B cell (primary cell): ENCODE measurements at regions of chr10 and their contacts with region 1.

Region 1: GRCh38 chr10:112721080-112721698 is 228.9 kb upstream of the TCF7L2 start:
- DNase-seq: peak; percentile 24
- ATAC-seq: peak; percentile 31
- H3K4me3 ChIP-seq: no peak overlapping the region
- H3K4me3 Mint-ChIP-seq: no peak overlapping the region
- H3K27ac ChIP-seq: no peak overlapping the region
- H3K27ac Mint-ChIP-seq: no peak overlapping the region
- H3K4me1 ChIP-seq: no peaks in the 10 kb centered on the region
- H3K4me1 Mint-ChIP-seq: no peaks in the 10 kb centered on the region
- H3K27me3 ChIP-seq: no peaks in the 10 kb centered on the region
- H3K27me3 Mint-ChIP-seq: no peaks in the 10 kb centered on the region
- CTCF ChIP-seq: peak; percentile 62

Region 2: DNA sequence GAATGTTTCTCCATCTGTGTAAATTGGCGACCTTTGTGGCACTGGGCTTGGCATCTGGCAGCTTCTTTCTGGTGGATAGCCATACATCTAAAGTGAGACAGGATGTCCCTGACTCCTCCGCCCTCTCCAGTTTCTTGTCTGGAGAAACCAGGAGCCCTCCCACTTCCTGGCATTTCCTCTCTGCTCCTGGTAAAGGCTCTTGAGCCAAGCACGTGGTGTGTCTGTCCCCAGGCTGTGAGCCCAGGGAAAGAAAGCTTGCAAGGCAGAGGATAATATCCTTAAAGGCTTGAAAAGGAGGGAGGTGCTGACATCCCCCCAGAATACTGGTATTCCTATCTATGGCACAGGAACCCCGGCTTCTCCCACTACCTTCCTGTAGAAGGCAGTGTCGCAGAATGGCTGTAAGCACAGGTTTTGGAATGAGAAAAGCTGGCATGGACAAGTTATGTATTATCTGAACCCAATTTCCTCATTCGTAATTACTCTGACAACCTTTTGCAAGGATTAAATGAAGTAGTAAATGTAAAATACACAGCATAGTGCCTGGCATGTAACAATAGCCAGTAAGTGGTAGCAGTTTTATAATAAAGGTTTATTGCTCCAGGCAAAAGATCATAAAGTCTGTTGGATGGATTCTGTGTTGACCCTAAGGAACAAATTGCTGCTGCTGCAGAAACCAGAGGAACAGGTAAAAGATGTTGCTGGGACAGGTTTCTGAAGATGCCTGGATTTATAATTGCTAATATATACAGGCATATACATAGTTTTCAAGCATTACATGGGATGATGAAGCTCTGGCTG is 359.0 kb before region 1 on chr10:
- CTCF ChIA-PET with region 1: no interaction called
- POLR2A ChIA-PET with region 1: no interaction called
- intact Hi-C with region 1: no loop called
- DNase-seq: no peak
- ATAC-seq: no peak
- H3K4me3 ChIP-seq: no peak overlapping the region
- H3K4me3 Mint-ChIP-seq: no peak overlapping the region
- H3K27ac ChIP-seq: no peak overlapping the region
- H3K27ac Mint-ChIP-seq: no peak overlapping the region
- H3K4me1 ChIP-seq: no peaks in the 10 kb centered on the region
- H3K4me1 Mint-ChIP-seq: no peaks in the 10 kb centered on the region
- H3K27me3 ChIP-seq: no peaks in the 10 kb centered on the region
- H3K27me3 Mint-ChIP-seq: peaks cover 10% of the 10 kb centered on the region
- CTCF ChIP-seq: no peak

Region 3: GRCh38 chr10:113385021-113385999 is 664.1 kb after region 1 on chr10:
- CTCF ChIA-PET with region 1: interaction called, 11 read pairs
- POLR2A ChIA-PET with region 1: no interaction called
- intact Hi-C with region 1: no loop called
- DNase-seq: peak; percentile 60
- ATAC-seq: peak; percentile 47
- H3K4me3 ChIP-seq: no peak overlapping the region
- H3K4me3 Mint-ChIP-seq: no peak overlapping the region
- H3K27ac ChIP-seq: no peak overlapping the region
- H3K27ac Mint-ChIP-seq: no peak overlapping the region
- H3K4me1 ChIP-seq: peaks cover 17% of the 10 kb centered on the region in 2 donors
- H3K4me1 Mint-ChIP-seq: peaks cover 18% of the 10 kb centered on the region
- H3K27me3 ChIP-seq: peaks cover 0 to 8% (median 0%) of the 10 kb centered on the region in 4 experiments
- H3K27me3 Mint-ChIP-seq: peaks cover 23% of the 10 kb centered on the region
- CTCF ChIP-seq: peak; percentile 55